Ascending aorta (tissue), 2 donors: ENCODE measurements at regions of chr6 and their contacts with region 1.

Region 1: GRCh38 chr6:47563162-47563561 is 85.6 kb downstream of the CD2AP start:
- DNase-seq: no peak
- H3K4me3 ChIP-seq: no peak overlapping the region
- H3K27ac ChIP-seq: no peak overlapping the region
- H3K4me1 ChIP-seq: no peaks in the 10 kb centered on the region
- H3K27me3 ChIP-seq: no peaks in the 10 kb centered on the region
- CTCF ChIP-seq: no peak

Region 2: DNA sequence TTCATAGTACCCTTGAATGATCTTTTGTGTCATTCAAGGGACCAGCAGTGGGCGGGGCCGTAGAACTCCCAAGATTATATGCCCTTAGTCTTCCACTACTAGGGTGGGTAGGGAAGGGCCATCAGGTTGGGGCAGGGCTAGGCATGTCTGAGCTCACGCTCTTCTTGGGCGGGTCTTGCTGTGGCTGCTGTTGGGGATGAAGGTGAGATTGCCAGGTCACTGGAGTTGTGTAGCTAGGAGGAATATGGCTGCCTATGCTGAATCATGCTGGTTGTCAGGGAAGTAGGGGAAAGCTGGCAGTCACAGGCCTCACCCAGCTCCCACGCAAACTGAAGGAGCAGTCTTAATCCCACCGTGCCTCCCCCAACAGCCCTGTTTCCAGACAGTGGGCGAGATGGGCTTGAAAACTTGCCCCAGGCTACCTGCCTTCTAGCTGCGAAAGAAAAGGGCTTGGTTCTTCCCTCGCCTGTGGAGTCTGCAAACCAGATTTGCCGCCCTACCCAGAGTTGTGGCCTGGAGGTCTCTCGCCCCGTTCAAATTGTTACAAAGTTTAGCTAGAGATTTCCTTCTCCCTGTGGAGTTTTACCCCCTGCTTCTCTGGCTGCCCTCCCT is 58.8 kb after region 1 on chr6:
- intact Hi-C with region 1: loop called (anchors 5 kb)
- DNase-seq: no peak
- H3K4me3 ChIP-seq: no peak overlapping the region
- H3K27ac ChIP-seq: no peak overlapping the region
- H3K4me1 ChIP-seq: no peaks in the 10 kb centered on the region
- H3K27me3 ChIP-seq: no peaks in the 10 kb centered on the region
- CTCF ChIP-seq: no peak